ENCODE measurements at regions of chr17 and their contacts with region 1.

Region 1: GRCh38 chr17:42405963-42406495 is 17.0 kb downstream of the CAVIN1 start:
- DNase-seq: peak; percentile 90
- H3K4me3 Mint-ChIP-seq: peak overlapping the region; percentile 12
- H3K27ac Mint-ChIP-seq: peak overlapping the region; percentile 8
- H3K4me1 Mint-ChIP-seq: peaks cover 16% of the 10 kb centered on the region
- H3K27me3 Mint-ChIP-seq: no peaks in the 10 kb centered on the region

Region 2: GRCh38 chr17:42248351-42249179 is 157.5 kb before region 1 on chr17:
- CTCF ChIA-PET with region 1: interaction called, 16 read pairs
- POLR2A ChIA-PET with region 1: no interaction called
- intact Hi-C with region 1: no loop called
- DNase-seq: peak; percentile 88
- H3K4me3 Mint-ChIP-seq: peak overlapping the region; percentile 73
- H3K27ac Mint-ChIP-seq: peak overlapping the region; percentile 95
- H3K4me1 Mint-ChIP-seq: peaks cover 68% of the 10 kb centered on the region
- H3K27me3 Mint-ChIP-seq: no peaks in the 10 kb centered on the region

Region 3: DNA sequence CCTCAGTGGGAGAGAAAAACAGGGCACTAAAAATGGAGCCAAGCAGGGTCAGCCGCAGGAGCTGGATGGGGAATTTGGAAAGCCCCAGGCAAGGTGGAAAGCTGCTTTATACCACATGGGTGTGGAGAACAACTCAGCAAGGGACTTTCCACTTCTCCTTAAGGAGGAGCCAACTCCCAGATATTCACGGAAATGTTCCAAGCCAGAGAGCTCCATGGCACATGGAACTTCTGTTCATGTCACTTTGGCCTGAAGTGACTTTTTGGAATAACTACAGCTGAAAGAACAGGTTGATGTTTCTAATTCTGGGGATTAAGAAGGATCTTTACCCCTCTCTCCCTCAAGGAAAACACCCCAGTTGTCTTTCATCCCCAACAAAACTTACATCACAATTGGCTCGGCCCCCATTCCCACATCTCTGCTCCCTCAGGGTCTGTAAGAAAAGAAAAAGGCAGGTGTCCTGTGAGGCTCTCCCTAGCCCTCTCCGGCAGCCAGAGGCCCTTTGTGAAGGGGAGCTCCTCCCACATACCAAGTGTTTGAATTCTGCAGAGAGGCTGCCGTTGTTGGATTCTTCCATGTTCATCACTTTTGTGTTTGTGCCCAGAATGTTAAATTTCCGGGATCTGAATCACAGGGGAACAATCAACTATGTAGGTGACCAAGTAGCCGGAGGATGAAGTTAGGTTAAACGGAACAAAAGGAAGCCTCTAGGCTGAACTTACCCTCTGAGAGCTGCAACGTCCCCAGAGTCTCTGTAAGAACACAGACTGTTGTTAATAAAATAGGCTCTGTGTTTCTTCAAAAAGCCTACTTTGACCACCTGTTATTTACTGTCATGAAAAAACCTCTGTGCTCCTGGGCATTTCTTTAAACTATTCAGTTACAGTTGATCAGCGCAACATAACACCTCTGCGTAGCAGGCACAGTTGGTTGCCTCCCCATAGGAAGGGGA is 76.7 kb before region 1 on chr17:
- CTCF ChIA-PET with region 1: interaction called, 281 read pairs
- POLR2A ChIA-PET with region 1: no interaction called
- intact Hi-C with region 1: no loop called
- DNase-seq: no peak
- H3K4me3 Mint-ChIP-seq: no peak overlapping the region
- H3K27ac Mint-ChIP-seq: peak overlapping the region; percentile 65
- H3K4me1 Mint-ChIP-seq: peaks cover 22% of the 10 kb centered on the region
- H3K27me3 Mint-ChIP-seq: no peaks in the 10 kb centered on the region

Region 4: GRCh38 chr17:42388381-42389134 is 17.5 kb before region 1 on chr17 and contains the start of gene STAT3:
- CTCF ChIA-PET with region 1: interaction called, 37 read pairs
- POLR2A ChIA-PET with region 1: interaction called, 4 read pairs
- intact Hi-C with region 1: no loop called
- DNase-seq: peak; percentile 100
- H3K4me3 Mint-ChIP-seq: peak within 1 kb of the TSS; percentile 88
- H3K27ac Mint-ChIP-seq: peak within 1 kb of the TSS; percentile 99
- H3K4me1 Mint-ChIP-seq: peaks cover 57% of the 10 kb centered on the region
- H3K27me3 Mint-ChIP-seq: no peaks in the 10 kb centered on the region
- total RNA-seq, gene STAT3: 194 to 198 TPM

Region 5: GRCh38 chr17:42517516-42517915 is 111.5 kb after region 1 on chr17:
- CTCF ChIA-PET with region 1: interaction called, 14 read pairs
- POLR2A ChIA-PET with region 1: no interaction called
- intact Hi-C with region 1: no loop called
- DNase-seq: peak; percentile 88
- H3K4me3 Mint-ChIP-seq: no peak overlapping the region
- H3K27ac Mint-ChIP-seq: no peak overlapping the region
- H3K4me1 Mint-ChIP-seq: no peaks in the 10 kb centered on the region
- H3K27me3 Mint-ChIP-seq: no peaks in the 10 kb centered on the region